ENCODE measurements at regions of chr9 and their contacts with region 1.

Region 1: DNA sequence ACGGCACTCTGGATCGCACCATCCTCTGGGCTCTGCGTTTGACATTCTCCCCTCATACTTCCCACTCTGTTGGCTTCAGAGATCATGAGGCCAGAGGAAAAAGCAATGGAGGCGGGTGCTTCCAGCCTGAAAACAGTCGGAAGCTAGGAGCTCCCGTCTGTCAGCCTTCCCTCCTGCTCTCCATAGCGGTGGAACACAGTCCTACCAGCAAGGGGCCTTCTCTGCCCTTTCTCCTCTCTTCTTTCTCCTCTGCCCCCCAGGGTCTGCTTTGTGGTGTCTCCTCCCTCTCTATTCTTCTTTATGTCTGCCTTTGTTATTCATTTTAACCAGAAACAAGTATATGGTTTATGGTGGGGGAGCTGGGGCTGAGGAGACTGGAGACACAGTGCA is 152.5 kb upstream of the NFIB start:
- DNase-seq: no peak
- ATAC-seq: no peak
- H3K4me3 ChIP-seq: no peak overlapping the region
- H3K27ac ChIP-seq: no peak overlapping the region
- H3K4me1 ChIP-seq: no peaks in the 10 kb centered on the region
- H3K27me3 ChIP-seq: peaks cover 8% of the 10 kb centered on the region
- CTCF ChIP-seq: no peak
- POLR2A ChIP-seq: no peak
- RAD21 ChIP-seq: no peak

Region 2: DNA sequence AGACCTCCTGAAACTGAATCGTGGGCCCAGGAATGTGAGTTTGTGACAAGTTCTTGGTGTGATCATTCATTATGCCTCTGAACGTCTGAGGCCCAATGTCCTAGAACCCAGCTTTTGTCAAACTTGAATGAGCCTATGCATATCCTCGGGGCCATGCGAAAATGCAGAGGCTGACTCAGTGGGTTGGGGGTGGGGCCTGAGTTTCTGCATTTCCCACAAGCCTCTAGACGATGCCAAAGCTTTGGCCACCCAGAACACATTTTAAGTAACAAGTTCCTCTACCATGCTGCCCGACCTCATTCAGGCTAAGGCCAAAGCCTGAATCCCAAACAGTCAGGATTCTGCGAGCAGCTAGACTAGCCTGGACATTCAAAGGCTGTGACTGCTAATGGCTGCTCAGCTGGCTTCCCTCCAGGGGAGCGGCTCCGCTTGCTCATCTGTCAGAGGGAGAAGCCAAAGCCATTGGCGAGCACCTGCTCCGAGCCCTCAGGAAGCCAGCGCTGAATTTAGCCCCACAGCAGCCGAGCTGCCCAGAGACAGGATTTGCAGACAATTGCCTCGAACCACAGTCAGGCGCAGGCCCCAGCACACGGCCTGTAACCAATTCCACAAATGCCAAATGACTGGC is 49.3 kb after region 1 on chr9:
- CTCF ChIA-PET with region 1: no interaction called
- POLR2A ChIA-PET with region 1: no interaction called
- dilution Hi-C with region 1: no loop called
- in situ Hi-C with region 1: no loop called
- intact Hi-C with region 1: no loop called
- DNase-seq: no peak
- ATAC-seq: no peak
- H3K4me3 ChIP-seq: no peak overlapping the region
- H3K27ac ChIP-seq: no peak overlapping the region
- H3K4me1 ChIP-seq: no peaks in the 10 kb centered on the region
- H3K27me3 ChIP-seq: no peaks in the 10 kb centered on the region; the same call in 1 of the 2 replicates
- CTCF ChIP-seq: no peak
- POLR2A ChIP-seq: no peak
- RAD21 ChIP-seq: no peak

Region 3: GRCh38 chr9:14661421-14662059 is 195.1 kb after region 1 on chr9:
- CTCF ChIA-PET with region 1: no interaction called
- POLR2A ChIA-PET with region 1: no interaction called
- dilution Hi-C with region 1: no loop called
- in situ Hi-C with region 1: no loop called
- intact Hi-C with region 1: loop called (anchors 2 kb)
- DNase-seq: peak; percentile 43
- ATAC-seq: peak; percentile 68
- H3K4me3 ChIP-seq: no peak overlapping the region
- H3K27ac ChIP-seq: no peak overlapping the region
- H3K4me1 ChIP-seq: no peaks in the 10 kb centered on the region
- H3K27me3 ChIP-seq: no peaks in the 10 kb centered on the region
- CTCF ChIP-seq: peak; percentile 59
- POLR2A ChIP-seq: no peak
- RAD21 ChIP-seq: peak; percentile 53

Region 4: DNA sequence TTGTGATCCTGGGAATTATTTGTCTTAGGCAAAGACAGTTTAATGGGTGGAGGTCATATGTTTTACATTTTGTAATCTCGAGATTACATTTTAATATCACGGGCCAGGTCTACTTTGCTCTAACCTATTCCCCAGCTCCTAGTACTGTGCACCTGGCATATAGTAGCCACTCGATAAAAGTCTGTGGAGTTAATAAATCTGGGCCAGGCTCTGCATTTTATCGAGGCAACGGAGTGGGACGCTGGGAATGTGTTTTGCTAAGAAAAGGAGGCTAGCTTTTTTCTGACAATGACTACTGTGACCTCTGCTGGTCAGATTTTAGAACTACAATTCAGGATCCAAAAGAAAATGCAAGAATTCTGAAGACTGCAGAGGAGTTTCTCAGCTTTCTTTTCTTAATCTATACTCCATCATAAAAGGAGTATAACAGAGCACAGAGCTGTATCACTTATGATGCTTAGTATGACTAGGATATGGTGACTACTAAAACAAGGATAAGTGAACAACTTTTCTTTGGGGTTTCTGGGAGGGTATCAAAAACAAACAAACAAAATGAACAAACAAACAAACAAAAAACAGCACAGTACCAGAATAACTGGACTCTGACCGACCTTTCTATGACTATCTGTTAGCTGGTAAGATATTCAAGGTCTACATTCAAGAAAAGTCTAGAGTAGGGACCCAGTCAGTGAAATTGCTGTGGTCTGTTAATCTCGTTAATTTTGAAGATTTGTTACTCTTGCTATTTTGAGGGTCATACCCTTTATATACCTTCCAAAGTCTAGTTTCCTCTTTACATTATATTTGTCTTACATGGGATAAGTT is 302.2 kb after region 1 on chr9:
- CTCF ChIA-PET with region 1: interaction called, 7 read pairs
- POLR2A ChIA-PET with region 1: no interaction called
- dilution Hi-C with region 1: no loop called
- in situ Hi-C with region 1: loop called (anchors 10 kb)
- intact Hi-C with region 1: loop called (anchors 1 kb)
- DNase-seq: peak; percentile 51
- ATAC-seq: peak; percentile 75
- H3K4me3 ChIP-seq: no peak overlapping the region
- H3K27ac ChIP-seq: no peak overlapping the region
- H3K4me1 ChIP-seq: no peaks in the 10 kb centered on the region
- H3K27me3 ChIP-seq: no peaks in the 10 kb centered on the region
- CTCF ChIP-seq: peak; percentile 72
- POLR2A ChIP-seq: no peak
- RAD21 ChIP-seq: peak; percentile 73

Region 5: DNA sequence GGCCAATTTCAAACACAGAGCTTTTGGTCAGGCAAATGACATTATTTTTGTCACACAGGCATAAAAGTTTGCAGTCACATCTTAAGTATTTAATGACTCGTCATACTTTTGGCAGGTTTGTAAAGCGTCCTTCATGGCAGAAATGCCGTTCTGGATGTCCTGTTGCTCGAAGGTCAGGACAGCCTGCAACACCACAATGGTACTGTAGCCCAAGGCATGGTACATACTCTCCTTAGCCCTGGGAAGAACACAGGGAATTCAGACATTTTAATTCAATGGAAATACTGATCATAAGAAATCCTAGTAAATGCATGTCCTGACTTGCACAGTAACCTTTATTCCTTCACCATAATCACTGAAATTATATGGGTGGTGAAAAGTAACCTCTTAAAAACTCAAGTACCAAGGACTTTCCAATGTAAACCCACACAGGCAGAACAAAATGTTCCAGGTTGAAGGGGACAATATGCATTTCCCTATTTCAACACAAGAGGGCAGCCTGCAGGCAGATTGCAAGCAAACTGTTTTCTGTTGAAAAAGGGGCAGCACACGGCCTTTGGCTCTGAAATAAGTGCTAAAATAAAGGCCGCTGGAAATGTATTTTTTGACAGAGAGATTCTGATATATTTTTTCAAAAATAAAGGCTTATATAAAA is 744.9 kb after region 1 on chr9:
- CTCF ChIA-PET with region 1: no interaction called
- POLR2A ChIA-PET with region 1: no interaction called
- dilution Hi-C with region 1: no loop called
- in situ Hi-C with region 1: no loop called
- intact Hi-C with region 1: no loop called
- DNase-seq: peak; percentile 79
- ATAC-seq: peak; percentile 78
- H3K4me3 ChIP-seq: no peak overlapping the region
- H3K27ac ChIP-seq: no peak overlapping the region; the same call in 1 of the 2 replicates
- H3K4me1 ChIP-seq: peaks cover 2% of the 10 kb centered on the region
- H3K27me3 ChIP-seq: no peaks in the 10 kb centered on the region
- CTCF ChIP-seq: peak; percentile 87
- POLR2A ChIP-seq: no peak; the same call in 1 of the 2 replicates
- RAD21 ChIP-seq: peak; percentile 88